CD4-positive, alpha-beta memory T cell (primary cell): ENCODE measurements at regions of chr4 and their contacts with region 1.

Region 1: GRCh38 chr4:163554870-163555465 is 60.5 kb downstream of the TMA16 start:
- DNase-seq: peak in 4 of 5 donors; percentile 34 to 43 (median 38)
- H3K4me3 ChIP-seq: no peak overlapping the region
- H3K4me3 Mint-ChIP-seq: no peak overlapping the region
- H3K27ac ChIP-seq: no peak overlapping the region
- H3K27ac Mint-ChIP-seq: peak overlapping the region in 2 of 7 donors; percentile 2 to 10
- H3K4me1 ChIP-seq: peaks cover 38% of the 10 kb centered on the region
- H3K4me1 Mint-ChIP-seq: peaks cover 29 to 43% (median 31%) of the 10 kb centered on the region in 4 donors
- H3K27me3 ChIP-seq: no peaks in the 10 kb centered on the region
- H3K27me3 Mint-ChIP-seq: no peaks in the 10 kb centered on the region

Region 2: GRCh38 chr4:161564230-161564834 is 1990.6 kb before region 1 on chr4:
- CTCF ChIA-PET with region 1: no interaction called
- POLR2A ChIA-PET with region 1: no interaction called
- intact Hi-C with region 1: no loop called
- DNase-seq: no peak
- H3K4me3 ChIP-seq: no peak overlapping the region
- H3K4me3 Mint-ChIP-seq: no peak overlapping the region
- H3K27ac ChIP-seq: no peak overlapping the region
- H3K27ac Mint-ChIP-seq: no peak overlapping the region
- H3K4me1 ChIP-seq: no peaks in the 10 kb centered on the region
- H3K4me1 Mint-ChIP-seq: no peaks in the 10 kb centered on the region
- H3K27me3 ChIP-seq: no peaks in the 10 kb centered on the region
- H3K27me3 Mint-ChIP-seq: no peaks in the 10 kb centered on the region

Region 3: DNA sequence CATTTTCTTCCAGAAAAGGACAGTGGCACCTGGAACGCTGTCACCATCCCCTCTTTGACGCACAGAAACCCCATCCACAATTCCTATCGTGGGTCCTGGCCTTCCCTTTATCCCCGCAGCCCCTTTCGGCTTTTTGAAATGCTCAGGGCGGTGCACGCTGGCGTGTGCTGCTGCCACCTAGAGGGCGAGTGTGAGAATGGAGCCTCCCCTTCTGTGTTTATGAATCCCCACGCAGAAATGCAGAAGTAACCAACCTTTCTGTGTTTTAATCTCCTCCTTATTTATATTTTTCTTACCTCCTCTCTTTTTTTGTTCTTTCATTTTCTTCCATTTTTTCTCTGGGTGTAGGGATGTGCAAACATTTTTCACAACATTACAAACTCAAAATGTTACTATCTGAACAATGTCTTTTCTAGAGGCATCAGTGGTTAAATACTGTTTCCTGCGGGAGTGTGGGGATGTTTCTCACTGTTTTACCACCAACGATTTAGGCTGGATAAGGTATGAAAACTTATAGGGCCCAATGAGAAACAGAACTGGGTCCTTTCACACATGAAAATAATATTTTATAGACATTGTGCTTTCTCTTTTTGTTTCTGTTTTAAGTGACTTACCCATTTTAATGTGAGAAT is 10.4 kb before region 1 on chr4:
- CTCF ChIA-PET with region 1: interaction called, 88 read pairs
- POLR2A ChIA-PET with region 1: interaction called, 4 read pairs
- intact Hi-C with region 1: no loop called
- DNase-seq: peak; percentile 41 to 49 (median 45)
- H3K4me3 ChIP-seq: peak overlapping the region in 1 of 2 donors; percentile 43
- H3K4me3 Mint-ChIP-seq: no peak overlapping the region
- H3K27ac ChIP-seq: no peak overlapping the region
- H3K27ac Mint-ChIP-seq: no peak overlapping the region
- H3K4me1 ChIP-seq: no peaks in the 10 kb centered on the region
- H3K4me1 Mint-ChIP-seq: peaks cover 1 to 13% (median 7%) of the 10 kb centered on the region in 4 donors
- H3K27me3 ChIP-seq: no peaks in the 10 kb centered on the region
- H3K27me3 Mint-ChIP-seq: no peaks in the 10 kb centered on the region

Region 4: GRCh38 chr4:163688856-163689255 is 133.9 kb after region 1 on chr4:
- CTCF ChIA-PET with region 1: interaction called, 633 read pairs
- POLR2A ChIA-PET with region 1: no interaction called
- intact Hi-C with region 1: no loop called
- DNase-seq: no peak
- H3K4me3 ChIP-seq: no peak overlapping the region
- H3K4me3 Mint-ChIP-seq: no peak overlapping the region
- H3K27ac ChIP-seq: no peak overlapping the region
- H3K27ac Mint-ChIP-seq: no peak overlapping the region
- H3K4me1 ChIP-seq: no peaks in the 10 kb centered on the region
- H3K4me1 Mint-ChIP-seq: no peaks in the 10 kb centered on the region
- H3K27me3 ChIP-seq: peaks cover 3% of the 10 kb centered on the region
- H3K27me3 Mint-ChIP-seq: peaks cover 6 to 12% of the 10 kb centered on the region in 2 donors

Region 5: DNA sequence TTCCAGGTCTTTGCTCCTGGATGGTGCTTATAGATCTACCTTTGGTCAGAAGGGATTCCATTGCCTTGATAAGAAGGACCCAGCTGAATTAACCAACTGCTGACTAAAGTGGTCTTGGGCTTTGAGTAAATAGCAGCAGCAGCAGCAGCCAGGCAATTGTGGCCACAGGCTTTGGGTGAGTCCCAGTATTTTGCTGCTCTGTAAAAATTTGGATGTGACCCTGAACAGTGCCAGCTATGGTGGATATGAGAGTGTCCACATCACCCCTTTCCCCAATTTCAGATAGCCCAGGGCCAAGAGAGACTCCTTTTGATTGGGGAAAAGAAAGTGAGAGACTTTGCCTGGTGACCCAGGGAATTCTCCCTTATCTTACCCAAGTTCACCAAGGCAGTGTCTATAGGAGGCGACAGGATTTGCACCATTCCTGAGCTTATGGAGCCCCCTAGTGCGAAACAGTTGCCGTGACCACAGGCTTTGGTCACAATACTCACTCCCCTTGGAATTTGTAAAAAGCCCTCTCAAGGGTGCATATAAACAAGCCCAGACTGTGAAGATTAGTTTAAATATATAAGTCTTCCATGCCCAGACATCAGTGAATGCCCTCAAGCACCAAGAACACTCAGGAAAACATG is 457.5 kb after region 1 on chr4:
- CTCF ChIA-PET with region 1: interaction called, 21 read pairs
- POLR2A ChIA-PET with region 1: no interaction called
- intact Hi-C with region 1: loop called (anchors 1 kb)
- DNase-seq: peak in 3 of 5 donors; percentile 9 to 24 (median 19)
- H3K4me3 ChIP-seq: no peak overlapping the region
- H3K4me3 Mint-ChIP-seq: no peak overlapping the region
- H3K27ac ChIP-seq: no peak overlapping the region
- H3K27ac Mint-ChIP-seq: no peak overlapping the region
- H3K4me1 ChIP-seq: peaks cover 13% of the 10 kb centered on the region
- H3K4me1 Mint-ChIP-seq: peaks cover 3 to 34% (median 19%) of the 10 kb centered on the region in 4 donors
- H3K27me3 ChIP-seq: no peaks in the 10 kb centered on the region
- H3K27me3 Mint-ChIP-seq: peaks cover 0 to 3% of the 10 kb centered on the region in 2 donors

Region 6: DNA sequence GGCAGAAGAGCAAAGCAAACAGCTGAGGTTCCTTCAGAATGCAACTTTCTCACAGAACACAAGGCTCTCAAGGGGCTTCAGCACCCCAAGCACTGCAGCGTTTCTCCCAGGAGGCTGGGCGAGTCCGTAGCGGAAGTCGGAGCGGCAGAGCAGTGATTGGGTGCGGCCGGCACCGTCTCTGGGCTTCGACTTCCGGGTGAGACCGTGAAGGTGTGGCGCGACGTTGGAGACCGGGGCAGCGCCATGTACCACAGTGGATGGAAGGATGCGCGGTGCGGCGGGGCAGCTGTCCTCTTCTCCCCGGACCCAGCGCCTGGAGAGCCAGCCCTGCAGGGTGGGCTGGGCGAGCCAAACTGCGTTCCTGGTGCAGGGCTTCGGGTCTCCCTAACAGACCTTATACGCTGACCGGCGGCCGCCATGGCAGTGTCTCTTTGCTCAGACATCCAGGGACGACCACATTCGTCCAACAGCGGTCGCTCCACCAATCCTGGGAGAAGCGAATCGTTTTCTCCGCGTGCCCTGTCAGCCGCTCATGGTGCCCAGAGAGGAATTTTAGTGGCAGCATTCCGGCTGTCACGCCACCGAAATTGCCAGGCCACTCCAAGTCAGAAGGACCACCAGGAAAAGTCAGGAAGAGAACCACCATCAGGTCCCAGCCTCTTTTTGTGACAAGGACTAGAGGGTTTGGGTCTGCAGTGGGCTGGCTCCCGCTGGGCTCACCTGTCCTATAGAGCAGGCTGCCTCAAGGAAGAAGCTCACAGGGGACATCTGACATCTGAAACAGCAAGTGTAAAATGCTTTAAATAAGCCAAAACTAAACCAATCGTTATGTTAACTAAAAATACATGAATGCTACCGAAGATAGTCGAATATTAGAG is 1402.0 kb after region 1 on chr4:
- CTCF ChIA-PET with region 1: no interaction called
- POLR2A ChIA-PET with region 1: no interaction called
- intact Hi-C with region 1: loop called (anchors 5 kb)
- DNase-seq: peak; percentile 54 to 70 (median 66)
- H3K4me3 ChIP-seq: peak overlapping the region; percentile 61 to 72
- H3K4me3 Mint-ChIP-seq: peak overlapping the region; percentile 85 to 93 (median 89)
- H3K27ac ChIP-seq: no peak overlapping the region
- H3K27ac Mint-ChIP-seq: peak overlapping the region in 6 of 7 donors; percentile 6 to 78 (median 48)
- H3K4me1 ChIP-seq: peaks cover 11% of the 10 kb centered on the region
- H3K4me1 Mint-ChIP-seq: peaks cover 5 to 25% (median 15%) of the 10 kb centered on the region in 4 donors
- H3K27me3 ChIP-seq: no peaks in the 10 kb centered on the region
- H3K27me3 Mint-ChIP-seq: peaks cover 5 to 6% of the 10 kb centered on the region in 2 donors